Dorsolateral prefrontal cortex (tissue), 120 donors: ENCODE measurements at regions of chr7 and their contacts with region 1.

Region 1: GRCh38 chr7:29408841-29409243 is 154.8 kb upstream of the PRR15 start:
- DNase-seq: peak in 4 of 10 donors; percentile 24 to 83 (median 59)
- H3K4me3 ChIP-seq: no peak overlapping the region
- H3K27ac ChIP-seq: no peak overlapping the region
- H3K27me3 ChIP-seq: no peaks in the 10 kb centered on the region
- CTCF ChIP-seq: peak; percentile 84 to 99 (median 93)

Region 2: DNA sequence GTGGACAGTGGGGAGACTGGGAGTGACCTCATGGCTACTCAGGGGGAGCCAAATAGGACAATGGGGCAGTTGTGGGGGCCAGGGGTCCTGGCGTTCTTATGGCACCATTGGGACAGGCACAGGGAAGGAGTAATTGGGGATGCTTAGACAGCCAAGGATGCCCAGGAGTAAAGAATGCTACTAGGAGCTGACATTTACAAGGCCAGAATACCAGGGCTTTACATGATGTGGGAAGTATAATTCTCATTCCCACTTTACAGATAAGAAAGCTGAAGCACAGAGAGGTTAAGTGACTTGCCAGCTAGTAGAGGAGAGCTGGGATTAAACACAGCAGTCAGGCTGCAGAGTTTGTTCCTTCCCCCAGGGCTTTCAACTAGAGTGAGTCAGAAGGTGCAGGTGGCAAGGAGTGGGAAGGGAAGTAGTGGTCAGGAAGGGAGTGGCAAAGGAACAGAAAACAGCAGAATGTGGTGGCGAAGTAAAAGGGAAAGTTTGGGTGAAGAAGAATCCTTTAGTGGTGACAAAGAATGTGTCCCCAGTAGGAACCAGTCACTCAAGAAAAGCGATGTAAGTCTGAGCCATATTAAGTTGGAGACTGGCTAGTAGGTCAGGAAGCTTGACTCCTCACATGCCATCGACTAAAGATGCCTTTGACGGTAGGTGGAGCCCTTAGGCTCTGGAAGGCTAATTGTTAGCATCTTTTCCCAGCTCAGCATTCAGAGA is 295.3 kb before region 1 on chr7:
- intact Hi-C with region 1: loop called (anchors 2 to 5 kb)
- DNase-seq: no peak
- H3K4me3 ChIP-seq: no peak overlapping the region
- H3K27ac ChIP-seq: no peak overlapping the region
- H3K27me3 ChIP-seq: peaks cover 0 to 13% (median 0%) of the 10 kb centered on the region in 45 donors
- CTCF ChIP-seq: peak in 25 of 56 donors; percentile 13 to 46 (median 23)

Region 3: GRCh38 chr7:29297194-29297890 is 111.5 kb before region 1 on chr7:
- intact Hi-C with region 1: no loop called
- DNase-seq: peak in 1 of 10 donors; percentile 59
- H3K4me3 ChIP-seq: no peak overlapping the region
- H3K27ac ChIP-seq: peak overlapping the region in 2 of 59 donors; percentile 27 to 79
- H3K27me3 ChIP-seq: no peaks in the 10 kb centered on the region
- CTCF ChIP-seq: peak in 2 of 56 donors; percentile 10 to 12

Region 4: DNA sequence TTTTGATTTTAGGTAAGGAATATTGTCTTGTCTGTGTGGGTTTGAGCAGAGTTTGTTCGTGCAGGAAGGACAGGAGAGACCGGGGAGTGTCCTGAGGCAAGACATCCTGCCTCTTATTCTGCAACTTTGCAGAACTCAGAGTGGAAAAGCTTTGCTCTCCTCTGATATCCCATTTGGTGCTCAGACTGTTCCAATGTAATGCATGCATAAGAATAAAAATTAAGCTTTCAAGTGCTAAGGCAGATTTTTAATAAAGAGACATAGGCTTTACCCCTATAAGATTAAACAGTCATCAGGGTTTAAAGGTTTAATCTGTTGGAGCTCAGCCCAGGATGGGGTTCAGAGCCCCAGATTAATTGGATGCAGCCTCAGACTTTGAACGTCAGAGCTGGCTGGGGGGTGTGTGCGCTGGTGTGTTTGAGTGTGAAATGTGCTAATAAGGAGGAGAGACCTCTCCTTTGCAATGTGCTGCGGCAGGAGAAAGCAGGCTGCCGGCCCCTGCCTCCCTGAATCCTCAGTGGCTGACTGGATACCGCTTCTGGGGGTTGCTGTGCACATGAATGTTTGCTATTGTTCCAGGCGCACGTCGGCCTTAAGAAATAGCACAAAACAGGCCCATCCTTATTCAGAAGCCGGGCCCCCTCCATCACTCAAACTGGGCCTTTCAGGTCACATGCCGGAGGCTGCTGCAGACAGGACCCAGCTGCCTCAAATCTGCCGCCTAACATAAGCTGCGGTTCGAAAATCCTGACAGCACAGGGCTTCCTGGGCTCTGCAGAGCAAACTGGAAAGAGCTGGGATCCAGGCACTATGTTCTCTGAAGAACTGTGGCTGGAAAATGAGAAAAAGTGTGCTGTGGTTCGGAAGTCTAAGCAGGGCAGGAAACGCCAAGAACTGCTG is 70.7 kb after region 1 on chr7:
- intact Hi-C with region 1: loop called in 1 of 2 experiments (anchors 5 kb)
- DNase-seq: peak; percentile 36 to 87 (median 75)
- H3K4me3 ChIP-seq: peak overlapping the region; percentile 17 to 70 (median 57)
- H3K27ac ChIP-seq: peak overlapping the region; percentile 54 to 100 (median 97)
- H3K27me3 ChIP-seq: no peaks in the 10 kb centered on the region
- CTCF ChIP-seq: peak in 4 of 56 donors; percentile 4 to 12 (median 8)

Region 5: DNA sequence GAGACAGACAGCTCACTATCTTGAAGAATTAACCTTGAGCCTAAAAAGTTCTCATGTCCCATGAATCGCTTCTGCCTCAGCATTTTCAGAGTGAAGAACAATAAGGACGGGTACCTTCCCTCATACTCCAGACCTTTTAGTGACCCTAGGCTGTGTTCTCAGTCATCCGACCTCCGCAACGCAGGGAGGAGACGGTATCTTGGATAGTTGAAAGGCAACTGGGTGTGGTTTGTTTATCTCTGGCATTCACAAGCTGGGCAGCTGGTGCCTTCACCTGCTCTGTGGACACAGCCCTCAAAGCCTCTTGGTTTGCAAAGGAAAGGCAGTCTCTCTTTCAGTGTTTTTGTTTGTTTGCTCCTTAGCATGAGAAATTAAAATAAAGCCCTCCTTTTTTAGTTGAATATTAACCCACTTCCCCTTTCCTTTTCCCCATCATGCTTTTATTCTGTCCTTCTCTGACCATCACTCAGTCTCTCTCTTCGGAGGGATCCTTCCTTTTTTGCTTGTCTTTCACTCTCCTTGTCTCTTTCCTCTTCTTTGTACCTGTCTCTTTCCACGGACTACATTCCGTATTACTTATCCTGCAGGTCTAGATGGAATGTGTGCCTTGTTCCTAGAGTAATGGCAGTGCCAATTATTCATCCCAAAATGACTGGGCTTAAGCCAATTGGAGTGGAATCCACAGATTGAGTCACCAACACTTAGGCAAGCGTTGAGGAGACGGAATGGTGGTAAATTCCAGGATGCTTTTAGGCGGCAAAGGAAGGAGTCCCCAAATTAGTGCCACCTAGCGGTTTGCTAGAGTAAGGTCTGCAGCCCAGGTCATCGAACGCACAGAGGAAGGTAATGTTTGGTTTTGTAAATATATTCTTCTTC is 200.6 kb after region 1 on chr7:
- intact Hi-C with region 1: no loop called
- DNase-seq: peak in 1 of 10 donors; percentile 32
- H3K4me3 ChIP-seq: no peak overlapping the region
- H3K27ac ChIP-seq: no peak overlapping the region
- H3K27me3 ChIP-seq: no peaks in the 10 kb centered on the region
- CTCF ChIP-seq: peak in 53 of 56 donors; percentile 11 to 64 (median 44)